ENCODE measurements at regions of chr19 and their contacts with region 1.

Region 1: DNA sequence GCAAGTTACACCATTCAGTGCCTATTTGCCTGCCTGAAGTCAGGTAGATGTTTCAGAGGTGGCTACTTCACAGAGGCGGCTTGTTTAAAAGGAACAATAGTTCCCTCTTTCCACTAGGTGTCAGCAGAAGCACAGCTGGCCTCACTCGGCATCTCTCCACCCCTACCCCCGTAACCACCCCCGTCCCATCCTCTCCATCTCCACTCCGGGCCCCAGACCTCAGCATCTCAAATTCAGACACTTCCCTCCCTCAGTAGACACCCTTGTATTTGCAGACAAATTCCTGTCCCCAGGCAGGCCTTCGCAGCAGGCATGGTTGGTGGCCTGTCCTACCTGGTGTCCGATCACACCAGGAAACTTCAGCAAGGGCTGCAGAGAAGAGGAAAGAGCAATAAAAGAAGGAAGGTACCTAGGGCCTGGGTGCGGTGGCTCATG is 9.1 kb upstream of the DPP9 start:
- DNase-seq: peak; percentile 63 to 75 (median 72)
- ATAC-seq: peak; percentile 93
- H3K4me3 ChIP-seq: no peak overlapping the region
- H3K27ac ChIP-seq: no peak overlapping the region
- H3K4me1 ChIP-seq: peaks cover 2 to 5% of the 10 kb centered on the region in 2 experiments; a peak in 2 of 5 replicates
- H3K27me3 ChIP-seq: peaks cover 13% of the 10 kb centered on the region in 2 experiments; a peak in 4 of 5 replicates
- CTCF ChIP-seq: peak; percentile 69 to 90 (median 89)
- EP300 ChIP-seq: no peak
- POLR2A ChIP-seq: no peak
- RAD21 ChIP-seq: peak; percentile 67 to 81

Region 2: DNA sequence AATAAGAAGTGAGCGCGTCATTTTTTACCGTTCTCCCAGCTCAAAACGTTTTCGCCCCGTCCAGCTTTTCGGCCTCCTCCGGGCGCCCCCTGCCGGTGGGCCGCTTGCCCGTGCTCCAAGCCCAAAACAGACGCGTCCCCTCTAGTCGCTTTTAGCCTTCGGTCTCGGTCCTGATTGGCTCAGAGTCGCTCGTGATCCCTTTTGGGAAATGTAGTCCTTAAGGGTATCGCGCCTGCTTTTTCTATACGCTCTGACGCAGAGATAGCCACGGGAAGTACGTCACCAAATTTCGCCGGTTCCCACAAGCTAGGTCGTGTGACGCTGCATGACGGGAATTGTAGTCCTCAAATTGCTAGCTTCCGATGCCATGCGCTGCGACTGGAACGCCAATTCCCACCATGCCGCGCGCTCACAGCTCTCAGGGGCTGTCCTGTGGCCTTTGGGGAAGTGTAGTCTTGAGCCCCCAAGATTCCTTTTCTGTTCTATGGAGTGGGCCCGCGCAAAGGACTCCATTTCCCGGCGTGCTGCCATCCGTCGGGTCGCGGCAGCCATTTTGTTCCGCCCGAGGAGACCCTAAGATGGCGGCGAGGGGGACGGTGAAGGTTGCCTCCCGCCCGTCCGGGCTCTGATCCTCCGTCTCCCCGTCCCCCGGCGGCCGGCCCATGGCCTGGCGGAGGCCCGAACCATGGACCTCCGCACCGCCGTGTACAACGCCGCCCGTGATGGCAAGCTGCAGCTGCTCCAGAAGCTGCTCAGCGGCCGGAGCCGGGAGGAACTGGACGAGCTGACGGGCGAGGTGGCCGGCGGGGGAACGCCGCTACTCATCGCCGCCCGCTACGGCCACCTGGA is 58.7 kb after region 1 on chr19 and contains the start of gene FEM1A:
- CTCF ChIA-PET with region 1: interaction called, 28 read pairs
- POLR2A ChIA-PET with region 1: interaction called, 10 read pairs
- in situ Hi-C with region 1: loop called (anchors 5 kb)
- intact Hi-C with region 1: loop called (anchors 1 kb)
- DNase-seq: peak; percentile 93 to 100 (median 95)
- ATAC-seq: peak; percentile 98
- H3K4me3 ChIP-seq: peak within 1 kb of the TSS; percentile 93
- H3K27ac ChIP-seq: peak within 1 kb of the TSS; percentile 98
- H3K4me1 ChIP-seq: peaks cover 14 to 49% of the 10 kb centered on the region in 2 experiments
- H3K27me3 ChIP-seq: no peaks in the 10 kb centered on the region
- CTCF ChIP-seq: peak; percentile 93 to 100 (median 99)
- EP300 ChIP-seq: no peak
- POLR2A ChIP-seq: peak; percentile 86
- RAD21 ChIP-seq: peak; percentile 90 to 92
- polyA plus RNA-seq, gene FEM1A: 0.08 to 0.11 TPM

Region 3: DNA sequence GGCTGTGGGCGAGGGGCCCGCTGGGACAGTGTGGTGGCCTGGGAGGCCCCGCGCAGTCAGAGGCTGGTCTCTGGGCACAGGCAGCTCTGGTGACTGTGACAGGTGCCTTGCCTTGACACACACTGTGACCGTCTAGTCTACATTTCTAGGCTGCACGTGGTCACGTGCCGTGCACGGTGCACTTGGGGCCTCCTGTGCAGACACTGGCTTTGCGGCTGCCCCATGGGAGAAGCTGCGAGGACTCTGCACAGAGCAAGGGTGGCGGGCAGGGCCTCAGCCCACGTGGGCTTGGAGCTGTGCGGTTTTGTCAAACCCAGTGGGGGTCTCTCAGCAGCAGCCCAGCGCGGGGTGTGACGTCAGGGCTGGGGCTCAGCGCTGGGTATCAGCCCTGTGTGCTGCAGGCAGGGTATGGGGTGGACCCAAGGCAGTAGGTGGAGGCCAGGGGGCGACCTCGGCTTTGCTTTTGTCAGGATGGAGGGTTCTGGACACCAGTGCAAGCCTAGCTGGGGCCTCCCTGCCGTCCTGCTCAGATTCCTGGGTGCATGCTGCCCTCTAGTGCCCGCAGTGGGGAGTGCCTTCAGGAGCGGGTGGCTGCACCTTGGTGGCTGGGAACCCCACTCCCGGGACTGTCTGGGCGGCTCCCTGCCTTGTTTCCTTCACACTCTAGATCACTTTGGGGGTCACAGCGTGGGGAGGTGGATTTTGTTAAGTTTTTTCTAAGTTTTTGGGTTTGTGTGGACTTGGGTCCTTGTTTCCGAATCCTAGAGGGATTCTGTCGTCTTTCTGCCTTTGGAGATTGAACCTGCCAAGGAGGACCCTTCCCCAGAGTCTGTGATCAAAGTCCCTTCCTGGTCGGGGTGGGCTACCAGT is 298.8 kb after region 1 on chr19:
- CTCF ChIA-PET with region 1: no interaction called
- POLR2A ChIA-PET with region 1: no interaction called
- in situ Hi-C with region 1: loop called (anchors 5 kb)
- intact Hi-C with region 1: no loop called
- DNase-seq: peak; percentile 85 to 92 (median 90)
- ATAC-seq: peak; percentile 97
- H3K4me3 ChIP-seq: no peak overlapping the region
- H3K27ac ChIP-seq: no peak overlapping the region
- H3K4me1 ChIP-seq: peaks cover 0 to 46% of the 10 kb centered on the region in 2 experiments; a peak in 3 of 5 replicates
- H3K27me3 ChIP-seq: no peaks in the 10 kb centered on the region
- CTCF ChIP-seq: peak; percentile 92 to 94 (median 94)
- EP300 ChIP-seq: no peak
- POLR2A ChIP-seq: no peak
- RAD21 ChIP-seq: peak; percentile 75 to 87

Measured in K562 (cell line).